ENCODE measurements at regions of chr12 and their contacts with region 1.

Region 1: DNA sequence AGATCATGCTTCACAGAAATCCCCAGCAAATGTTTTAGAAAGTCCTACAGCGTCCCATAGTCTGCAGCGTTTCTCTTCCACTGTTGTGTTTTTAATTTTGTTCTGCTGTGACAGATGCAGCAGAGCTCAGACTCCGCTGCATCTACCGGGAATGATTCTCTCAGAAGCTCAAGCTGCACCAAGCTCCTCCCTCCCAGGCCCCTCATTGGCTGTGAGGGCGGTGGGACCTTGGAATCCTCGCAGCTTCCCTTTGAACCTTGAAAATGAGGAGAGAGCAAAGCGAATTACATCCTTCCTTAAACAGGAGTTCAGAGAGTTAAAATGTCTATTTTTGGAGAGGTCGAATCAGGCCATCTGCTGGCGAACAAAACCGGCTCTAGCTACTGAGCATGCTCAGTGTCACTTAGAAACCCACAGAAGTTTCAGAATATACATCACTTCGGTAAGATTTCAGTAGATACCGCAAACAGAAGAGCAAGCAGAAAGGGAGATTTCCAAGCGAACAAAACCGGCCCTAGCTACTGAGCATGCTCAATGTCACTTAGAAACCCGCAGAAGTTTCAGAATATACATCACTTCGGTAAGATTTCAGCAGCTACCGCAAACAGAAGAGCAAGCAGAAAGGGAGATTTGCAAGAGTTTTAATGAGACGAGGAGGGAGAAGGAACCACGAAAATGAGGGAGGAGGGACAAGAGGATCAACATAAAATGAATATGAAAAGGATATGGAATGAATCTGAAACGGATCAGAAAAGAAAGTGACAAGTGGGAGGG is at the start of gene ABCD2:
- DNase-seq: peak; percentile 54
- CTCF ChIP-seq: no peak

Region 2: DNA sequence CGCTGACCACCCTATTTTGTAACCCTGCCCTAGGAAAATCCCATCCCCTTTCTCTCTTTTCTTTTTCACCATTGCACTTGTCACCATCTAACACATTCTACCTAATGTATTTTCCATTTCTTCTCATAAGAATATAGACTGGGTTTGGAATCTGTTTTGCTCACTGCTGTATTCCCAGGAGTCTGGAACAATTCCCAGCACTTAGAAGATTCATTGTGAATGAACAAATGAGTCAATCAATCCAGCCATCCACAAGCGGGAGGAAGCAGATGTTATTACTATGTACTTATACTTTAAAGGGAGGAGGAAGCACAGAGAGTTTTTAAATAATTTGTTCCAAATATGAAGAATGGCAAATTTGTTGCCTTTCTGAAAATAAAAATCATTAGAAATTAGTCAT is 319.0 kb before region 1 on chr12:
- in situ Hi-C with region 1: loop called (anchors 25 kb)
- DNase-seq: no peak
- CTCF ChIP-seq: no peak

Region 3: DNA sequence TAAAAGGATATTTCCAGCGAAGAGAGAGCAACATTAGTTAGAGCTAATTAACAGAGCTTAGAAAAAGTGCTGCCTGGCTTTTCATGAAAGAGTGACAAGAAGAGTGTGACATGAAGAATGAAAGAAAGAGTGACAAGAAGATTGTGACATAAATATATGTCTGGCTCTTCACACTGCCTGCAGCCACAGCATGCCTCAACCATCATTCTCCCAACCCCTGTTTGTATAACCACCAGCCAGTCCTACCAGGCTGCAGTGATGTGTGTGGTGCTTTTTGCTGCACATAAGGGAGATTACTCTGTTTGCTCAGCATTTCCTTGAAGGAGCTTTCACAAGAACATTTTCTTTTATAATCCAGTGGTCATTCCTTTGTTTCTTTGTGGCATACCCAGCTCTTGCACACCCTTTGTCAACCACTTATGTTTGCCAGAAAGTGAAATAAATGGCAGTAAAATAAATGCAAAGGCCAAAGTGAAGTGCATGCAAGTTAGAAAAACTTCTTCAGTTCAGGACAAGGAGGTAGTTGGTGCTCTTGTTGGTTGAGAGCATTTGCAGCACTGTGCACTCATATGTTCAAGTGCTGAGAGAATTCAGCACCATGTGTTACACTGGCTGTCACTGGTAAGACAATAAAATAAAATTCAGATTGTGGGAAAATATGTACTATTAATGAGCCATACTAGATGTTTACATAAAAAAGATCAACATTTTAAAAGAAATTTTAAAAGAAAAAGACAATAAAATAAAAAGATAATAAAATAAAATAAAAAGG is 227.5 kb before region 1 on chr12:
- in situ Hi-C with region 1: no loop called
- DNase-seq: no peak
- CTCF ChIP-seq: no peak

Region 4: DNA sequence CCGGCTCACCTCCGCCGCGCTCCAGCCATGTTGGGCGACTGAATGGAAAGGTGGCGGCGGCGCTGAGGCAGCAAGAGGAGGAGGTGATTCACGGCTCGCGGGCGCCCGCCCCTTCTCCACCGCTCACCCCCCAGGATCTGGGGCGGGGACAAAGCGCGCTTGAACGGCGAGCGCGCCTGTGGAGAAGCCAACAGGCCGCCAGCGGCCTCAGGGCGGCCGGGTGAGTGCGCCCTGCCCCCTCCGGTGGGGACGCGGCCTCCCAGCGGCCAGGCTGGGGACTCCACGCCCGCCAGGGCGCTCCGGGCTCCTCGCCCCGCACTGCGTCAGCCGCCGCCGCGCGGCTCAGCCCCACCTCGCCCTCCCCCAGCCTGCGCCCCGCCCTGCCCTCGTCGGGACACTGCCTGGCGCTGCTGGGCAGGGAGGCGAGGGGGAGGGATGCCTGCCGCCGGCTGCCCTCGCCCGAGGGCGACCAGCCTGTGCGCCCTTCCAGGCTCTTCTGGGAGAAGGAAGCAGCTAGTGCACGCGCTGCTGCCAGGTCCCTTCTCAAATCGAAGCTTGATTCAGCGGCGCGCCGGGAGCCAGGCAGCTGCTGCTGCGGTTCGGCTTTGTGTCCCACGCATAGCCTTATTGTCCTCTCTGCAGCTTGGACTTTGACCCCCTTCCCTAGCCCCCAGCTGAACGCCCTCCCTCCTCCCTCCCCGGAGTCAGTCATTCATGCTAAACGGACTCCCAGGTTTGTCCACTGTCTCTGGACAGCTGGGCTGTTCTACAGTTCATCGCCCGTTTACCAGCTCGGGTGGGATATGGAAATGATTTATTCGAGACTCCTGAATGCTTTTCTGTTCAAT is 176.5 kb before region 1 on chr12 and contains the start of gene KIF21A:
- in situ Hi-C with region 1: loop called (anchors 25 kb)
- DNase-seq: peak; percentile 90
- CTCF ChIP-seq: peak; percentile 34

Region 5: GRCh38 chr12:39503445-39503844 is 116.4 kb before region 1 on chr12:
- in situ Hi-C with region 1: loop called (anchors 25 kb)
- DNase-seq: no peak
- CTCF ChIP-seq: no peak

Measured in GM13976 (cell line).